Dendritic cell treated with granulocyte-macrophage colony-stimulating factor and Interleukin-4, amounts not matched to agents 40 ng/mL and 50 ng/mL, for 4 days (primary cell): ENCODE measurements at regions of chr6 and their contacts with region 1.

Region 1: GRCh38 chr6:25179051-25179778 is 100.0 kb upstream of the CARMIL1 start:
- H3K4me3 Mint-ChIP-seq: no peak overlapping the region
- H3K27ac Mint-ChIP-seq: peak overlapping the region; percentile 54
- H3K4me1 Mint-ChIP-seq: peaks cover 50% of the 10 kb centered on the region
- H3K27me3 Mint-ChIP-seq: peaks cover 4% of the 10 kb centered on the region

Region 2: GRCh38 chr6:25138237-25139125 is 40.7 kb before region 1 on chr6:
- intact Hi-C with region 1: loop called (anchors 5 kb)
- H3K4me3 Mint-ChIP-seq: peak overlapping the region; percentile 70
- H3K27ac Mint-ChIP-seq: peak overlapping the region; percentile 92
- H3K4me1 Mint-ChIP-seq: peaks cover 45% of the 10 kb centered on the region
- H3K27me3 Mint-ChIP-seq: no peaks in the 10 kb centered on the region

Region 3: DNA sequence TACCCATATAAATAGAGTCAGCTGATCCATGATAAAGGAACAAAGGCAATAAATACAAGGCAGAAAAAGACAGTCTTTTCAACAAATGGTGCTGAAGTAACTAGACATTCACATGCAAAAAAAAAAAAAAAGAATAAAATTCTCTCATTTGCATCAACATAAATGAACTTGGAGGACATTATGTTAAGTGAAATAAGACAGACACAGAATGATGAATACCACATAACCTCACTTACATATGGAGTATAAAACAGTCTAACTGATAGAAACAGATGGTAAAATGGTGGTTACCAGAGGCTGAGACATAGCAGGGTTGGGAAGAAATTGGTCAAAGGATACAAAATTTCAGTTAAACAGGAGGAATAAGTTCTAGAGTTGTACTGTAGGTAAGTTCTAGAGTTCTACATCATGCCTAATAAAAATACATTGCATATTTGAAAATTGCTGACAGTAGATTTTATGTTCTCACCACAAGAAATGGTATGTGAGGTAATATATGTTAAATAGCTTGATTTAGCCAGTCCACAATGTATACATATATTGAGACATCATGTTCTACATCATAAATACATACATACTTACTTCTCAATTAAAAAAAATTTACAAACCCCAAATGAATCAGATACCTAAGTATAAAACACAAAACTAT is 1472.0 kb after region 1 on chr6:
- intact Hi-C with region 1: no loop called
- H3K4me3 Mint-ChIP-seq: no peak overlapping the region
- H3K27ac Mint-ChIP-seq: no peak overlapping the region
- H3K4me1 Mint-ChIP-seq: no peaks in the 10 kb centered on the region
- H3K27me3 Mint-ChIP-seq: no peaks in the 10 kb centered on the region